Esophagus squamous epithelium (tissue), 5 donors: ENCODE measurements at regions of chrX and their contacts with region 1.

Region 1: DNA sequence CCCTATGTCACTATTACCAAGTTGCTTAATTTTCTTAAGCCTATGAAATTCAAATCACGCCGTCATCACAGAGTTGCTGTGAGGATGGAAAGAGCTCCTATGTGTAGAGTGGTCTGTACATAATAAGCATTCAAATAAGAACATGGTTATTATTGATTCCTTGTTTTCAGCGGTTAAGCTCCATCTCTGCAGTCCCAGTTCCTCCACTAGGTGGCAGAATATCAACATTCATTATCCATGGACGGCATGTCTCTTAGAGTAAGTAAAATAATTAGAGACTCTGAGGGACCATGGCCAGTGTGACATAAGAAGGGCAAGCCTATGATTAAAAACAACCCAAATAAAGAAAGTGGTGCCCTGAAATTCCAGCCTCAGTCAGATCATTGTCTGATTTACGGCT is 132.5 kb upstream of the NHS start:
- DNase-seq: no peak
- H3K4me3 ChIP-seq: no peak overlapping the region
- H3K27ac ChIP-seq: no peak overlapping the region
- H3K4me1 ChIP-seq: no peaks in the 10 kb centered on the region
- H3K27me3 ChIP-seq: no peaks in the 10 kb centered on the region
- CTCF ChIP-seq: peak; percentile 57 to 81 (median 68)
- POLR2A ChIP-seq: no peak

Region 2: GRCh38 chrX:17588303-17588702 is 345.8 kb after region 1 on chrX:
- intact Hi-C with region 1: loop called (anchors 5 kb)
- DNase-seq: no peak
- H3K4me3 ChIP-seq: no peak overlapping the region
- H3K27ac ChIP-seq: no peak overlapping the region
- H3K4me1 ChIP-seq: peaks cover 3 to 18% (median 8%) of the 10 kb centered on the region in 3 donors
- H3K27me3 ChIP-seq: no peaks in the 10 kb centered on the region
- CTCF ChIP-seq: no peak
- POLR2A ChIP-seq: no peak

Region 3: DNA sequence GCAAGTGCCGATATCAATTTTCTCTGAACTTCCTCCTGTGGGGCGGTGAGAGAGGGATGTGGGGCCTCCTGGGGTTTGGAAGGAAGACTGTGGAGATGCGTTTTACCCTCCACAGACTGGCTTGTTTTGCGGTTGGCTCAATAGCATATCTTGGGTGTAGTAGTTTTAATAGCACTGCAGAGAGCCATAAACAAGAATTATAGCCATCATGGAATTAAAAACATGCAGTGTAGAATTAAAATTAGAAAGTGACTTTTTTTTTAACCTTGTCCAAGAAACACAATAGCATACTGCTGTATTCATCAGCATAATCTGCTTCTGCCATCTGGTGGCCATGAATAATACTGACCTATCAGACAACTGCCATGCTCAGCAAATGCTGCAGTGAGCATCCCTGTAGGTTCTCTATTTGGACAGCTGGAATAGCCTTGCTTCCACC is 447.5 kb after region 1 on chrX:
- intact Hi-C with region 1: loop called (anchors 5 kb)
- DNase-seq: no peak
- H3K4me3 ChIP-seq: no peak overlapping the region
- H3K27ac ChIP-seq: no peak overlapping the region
- H3K4me1 ChIP-seq: peaks cover 0 to 4% (median 0%) of the 10 kb centered on the region in 3 donors
- H3K27me3 ChIP-seq: no peaks in the 10 kb centered on the region
- CTCF ChIP-seq: peak in 5 of 6 experiments; percentile 58 to 69 (median 65)
- POLR2A ChIP-seq: no peak